ENCODE measurements at regions of chr14 and their contacts with region 1.

Region 1: DNA sequence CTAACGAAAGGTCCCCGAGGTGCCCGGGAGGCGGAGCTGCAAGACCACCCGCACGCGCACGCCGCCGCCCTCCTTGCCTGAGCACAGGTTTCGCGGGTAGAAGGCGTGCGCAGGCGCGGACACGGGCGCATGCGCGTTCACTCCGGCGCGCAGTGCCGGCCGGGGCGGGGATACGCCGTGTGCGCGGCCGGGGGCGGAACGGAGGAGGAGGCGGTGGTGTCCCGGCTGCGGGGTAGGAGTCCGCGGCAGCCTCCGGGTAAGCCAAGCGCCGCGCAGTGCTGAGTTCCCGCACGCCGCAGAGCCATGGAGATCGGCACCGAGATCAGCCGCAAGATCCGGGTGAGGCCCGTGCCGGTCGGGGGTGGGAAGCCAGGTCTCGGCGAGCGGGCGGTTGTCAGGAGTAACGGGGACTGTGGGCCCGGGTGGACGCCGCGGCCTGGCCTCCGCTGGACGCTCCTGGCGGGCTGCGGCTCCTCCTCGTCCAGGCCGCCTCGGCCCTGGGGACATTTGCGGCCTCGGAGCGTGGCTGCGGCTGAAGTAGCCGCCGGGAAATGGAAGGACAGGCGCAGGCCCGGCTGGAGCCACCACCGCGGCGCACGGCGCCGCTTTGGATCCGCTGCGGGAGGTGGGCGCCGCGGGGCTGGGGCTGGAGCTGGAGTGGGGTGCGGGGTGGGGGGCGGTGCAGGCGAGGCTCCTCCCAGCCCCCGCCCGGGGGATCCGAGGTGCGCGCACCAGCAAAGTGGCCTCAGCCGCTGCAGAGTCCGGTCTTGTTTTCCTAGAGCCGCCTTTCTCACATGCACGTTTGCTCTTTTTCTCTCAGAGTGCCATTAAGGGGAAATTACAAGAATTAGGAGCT is at the start of gene ZC3H14:
- DNase-seq: peak; percentile 91
- ATAC-seq: peak; percentile 94
- H3K4me3 Mint-ChIP-seq: peak within 1 kb of the TSS; percentile 83
- H3K27ac Mint-ChIP-seq: peak within 1 kb of the TSS; percentile 92
- H3K4me1 Mint-ChIP-seq: peaks cover 31% of the 10 kb centered on the region
- H3K27me3 Mint-ChIP-seq: peaks cover 12% of the 10 kb centered on the region
- total RNA-seq, gene ZC3H14: 46.9 to 63.6 TPM

Region 2: DNA sequence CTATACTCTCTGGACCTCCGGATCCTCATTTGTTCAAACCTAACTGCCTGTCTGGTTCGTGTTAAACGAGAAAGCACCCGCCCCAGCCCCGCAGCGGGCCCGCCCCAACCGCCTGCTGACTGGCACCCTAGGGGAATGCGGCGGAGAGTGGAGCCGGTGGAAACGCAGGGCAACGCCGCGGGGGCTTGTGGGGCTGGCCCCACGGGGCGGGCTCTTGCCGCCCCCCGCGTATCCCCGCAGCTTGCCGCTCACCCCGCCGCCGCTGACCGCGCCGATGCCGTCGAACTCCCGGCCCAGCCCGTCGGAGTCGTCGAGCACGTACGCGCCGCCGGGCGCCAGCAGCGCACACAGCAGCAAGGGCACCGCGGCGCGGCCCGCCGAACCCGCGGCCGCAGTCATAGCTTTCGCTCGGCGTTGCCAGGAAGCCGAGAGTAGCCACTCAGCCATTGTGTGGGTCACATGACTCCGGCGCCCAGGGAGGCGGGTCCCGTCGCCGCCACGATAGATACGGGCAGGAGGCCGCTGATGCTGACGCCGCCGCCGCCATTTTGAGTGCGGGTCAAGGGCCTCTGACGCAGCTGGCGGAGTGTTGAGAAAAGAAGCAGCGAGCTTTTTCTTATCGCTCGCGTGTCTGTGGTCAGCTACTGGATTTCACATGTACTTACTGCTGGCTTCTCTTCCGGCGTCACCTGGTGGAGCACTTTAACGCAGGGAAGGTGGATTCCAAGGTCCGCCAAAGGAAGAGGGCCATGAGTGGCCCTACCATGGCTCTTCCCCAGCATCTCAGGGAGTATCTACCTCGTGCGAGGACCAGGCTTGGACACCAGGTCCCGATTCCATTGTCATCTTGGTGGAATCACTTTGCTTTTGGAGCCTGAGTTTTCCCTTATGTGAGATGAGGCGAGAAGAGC is 570.1 kb before region 1 on chr14 and contains the start of gene GALC:
- CTCF ChIA-PET with region 1: no interaction called
- POLR2A ChIA-PET with region 1: no interaction called
- intact Hi-C with region 1: loop called in 1 of 2 experiments (anchors 5 kb)
- DNase-seq: peak; percentile 97
- ATAC-seq: peak; percentile 90
- H3K4me3 Mint-ChIP-seq: peak within 1 kb of the TSS; percentile 81
- H3K27ac Mint-ChIP-seq: peak within 1 kb of the TSS; percentile 95
- H3K4me1 Mint-ChIP-seq: peaks cover 56% of the 10 kb centered on the region
- H3K27me3 Mint-ChIP-seq: no peaks in the 10 kb centered on the region
- total RNA-seq, gene GALC: 10.3 to 10.8 TPM

Region 3: DNA sequence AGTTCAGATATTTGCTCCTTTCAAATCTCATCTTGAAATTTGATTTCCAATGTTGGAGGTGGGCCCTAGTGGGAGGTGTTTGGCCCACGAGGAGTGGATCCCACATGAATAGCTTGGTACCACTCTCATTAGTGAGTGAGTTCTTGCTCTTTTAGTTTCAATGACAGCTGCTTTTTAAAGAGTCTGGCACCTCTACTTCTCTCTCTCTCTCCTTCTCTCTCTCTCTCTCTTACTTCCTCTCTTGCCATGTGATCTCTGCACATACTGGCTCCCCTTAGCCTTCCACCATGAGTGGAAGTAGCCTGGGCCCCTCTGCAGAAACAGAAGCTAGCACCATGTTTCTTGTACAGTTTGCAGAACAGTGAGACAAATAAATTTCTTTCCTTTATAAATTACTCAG is 533.0 kb before region 1 on chr14:
- CTCF ChIA-PET with region 1: no interaction called
- POLR2A ChIA-PET with region 1: no interaction called
- intact Hi-C with region 1: no loop called
- DNase-seq: no peak
- ATAC-seq: no peak
- H3K4me3 Mint-ChIP-seq: no peak overlapping the region
- H3K27ac Mint-ChIP-seq: peak overlapping the region; percentile 32
- H3K4me1 Mint-ChIP-seq: peaks cover 50% of the 10 kb centered on the region
- H3K27me3 Mint-ChIP-seq: no peaks in the 10 kb centered on the region

Region 4: GRCh38 chr14:88146881-88147649 is 416.0 kb before region 1 on chr14:
- CTCF ChIA-PET with region 1: no interaction called
- POLR2A ChIA-PET with region 1: no interaction called
- intact Hi-C with region 1: no loop called
- DNase-seq: no peak
- ATAC-seq: no peak
- H3K4me3 Mint-ChIP-seq: no peak overlapping the region
- H3K27ac Mint-ChIP-seq: no peak overlapping the region
- H3K4me1 Mint-ChIP-seq: no peaks in the 10 kb centered on the region
- H3K27me3 Mint-ChIP-seq: no peaks in the 10 kb centered on the region

Region 5: GRCh38 chr14:88228522-88229236 is 334.4 kb before region 1 on chr14:
- CTCF ChIA-PET with region 1: no interaction called
- POLR2A ChIA-PET with region 1: no interaction called
- intact Hi-C with region 1: no loop called
- DNase-seq: peak; percentile 36
- ATAC-seq: peak; percentile 83
- H3K4me3 Mint-ChIP-seq: no peak overlapping the region
- H3K27ac Mint-ChIP-seq: no peak overlapping the region
- H3K4me1 Mint-ChIP-seq: peaks cover 4% of the 10 kb centered on the region
- H3K27me3 Mint-ChIP-seq: peaks cover 20% of the 10 kb centered on the region

Region 6: GRCh38 chr14:88385345-88386101 is 177.5 kb before region 1 on chr14 and contains the start of gene SPATA7:
- CTCF ChIA-PET with region 1: no interaction called
- POLR2A ChIA-PET with region 1: no interaction called
- intact Hi-C with region 1: loop called in 1 of 2 experiments (anchors 2 kb)
- DNase-seq: peak; percentile 93
- ATAC-seq: peak; percentile 99
- H3K4me3 Mint-ChIP-seq: peak within 1 kb of the TSS; percentile 96
- H3K27ac Mint-ChIP-seq: peak within 1 kb of the TSS; percentile 88
- H3K4me1 Mint-ChIP-seq: peaks cover 17% of the 10 kb centered on the region
- H3K27me3 Mint-ChIP-seq: no peaks in the 10 kb centered on the region
- total RNA-seq, gene SPATA7: 3.4 to 4.0 TPM

Region 7: GRCh38 chr14:88492272-88493089 is 70.6 kb before region 1 on chr14:
- CTCF ChIA-PET with region 1: interaction called, 3 read pairs
- POLR2A ChIA-PET with region 1: no interaction called
- intact Hi-C with region 1: loop called (anchors 2 kb)
- DNase-seq: peak; percentile 74
- ATAC-seq: peak; percentile 69
- H3K4me3 Mint-ChIP-seq: no peak overlapping the region
- H3K27ac Mint-ChIP-seq: no peak overlapping the region
- H3K4me1 Mint-ChIP-seq: no peaks in the 10 kb centered on the region
- H3K27me3 Mint-ChIP-seq: peaks cover 3% of the 10 kb centered on the region

Region 8: DNA sequence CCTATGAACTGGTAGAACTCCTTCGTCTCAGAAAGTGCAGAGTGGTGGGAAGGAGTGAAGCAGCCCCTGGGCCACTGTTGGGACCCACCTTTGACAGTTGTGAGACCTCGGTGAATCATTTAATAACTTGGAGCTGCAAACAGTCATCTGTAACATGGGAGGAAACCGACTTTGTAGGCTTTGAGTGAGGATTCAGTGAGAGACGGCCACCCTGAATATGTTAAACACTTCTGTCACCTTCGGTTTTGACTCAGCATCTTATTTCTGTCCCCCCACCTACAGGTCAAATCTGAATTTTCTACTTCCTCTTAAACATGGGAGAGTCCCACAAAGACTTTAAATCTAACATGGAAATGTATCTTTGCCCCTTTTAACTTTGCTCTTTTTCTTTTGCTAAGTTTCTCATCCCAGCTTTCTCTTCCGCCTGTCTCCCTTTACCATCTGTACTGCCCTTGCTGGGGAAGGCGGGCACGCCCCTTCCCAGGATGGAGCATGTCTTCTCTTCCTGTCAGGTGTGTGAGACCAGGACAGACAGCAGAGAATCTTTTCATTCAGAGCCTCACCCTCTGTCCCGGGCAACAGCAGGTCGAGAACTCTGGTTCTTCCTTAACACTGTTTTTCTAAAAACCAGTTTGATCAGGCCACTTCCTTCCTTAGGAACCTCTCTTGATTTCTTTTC is 36.8 kb after region 1 on chr14:
- CTCF ChIA-PET with region 1: no interaction called
- POLR2A ChIA-PET with region 1: interaction called, 4 read pairs
- intact Hi-C with region 1: loop called in 1 of 2 experiments (anchors 2 kb)
- DNase-seq: peak; percentile 52
- ATAC-seq: peak; percentile 94
- H3K4me3 Mint-ChIP-seq: peak overlapping the region; percentile 38
- H3K27ac Mint-ChIP-seq: peak overlapping the region; percentile 78
- H3K4me1 Mint-ChIP-seq: peaks cover 26% of the 10 kb centered on the region
- H3K27me3 Mint-ChIP-seq: no peaks in the 10 kb centered on the region

Region 9: DNA sequence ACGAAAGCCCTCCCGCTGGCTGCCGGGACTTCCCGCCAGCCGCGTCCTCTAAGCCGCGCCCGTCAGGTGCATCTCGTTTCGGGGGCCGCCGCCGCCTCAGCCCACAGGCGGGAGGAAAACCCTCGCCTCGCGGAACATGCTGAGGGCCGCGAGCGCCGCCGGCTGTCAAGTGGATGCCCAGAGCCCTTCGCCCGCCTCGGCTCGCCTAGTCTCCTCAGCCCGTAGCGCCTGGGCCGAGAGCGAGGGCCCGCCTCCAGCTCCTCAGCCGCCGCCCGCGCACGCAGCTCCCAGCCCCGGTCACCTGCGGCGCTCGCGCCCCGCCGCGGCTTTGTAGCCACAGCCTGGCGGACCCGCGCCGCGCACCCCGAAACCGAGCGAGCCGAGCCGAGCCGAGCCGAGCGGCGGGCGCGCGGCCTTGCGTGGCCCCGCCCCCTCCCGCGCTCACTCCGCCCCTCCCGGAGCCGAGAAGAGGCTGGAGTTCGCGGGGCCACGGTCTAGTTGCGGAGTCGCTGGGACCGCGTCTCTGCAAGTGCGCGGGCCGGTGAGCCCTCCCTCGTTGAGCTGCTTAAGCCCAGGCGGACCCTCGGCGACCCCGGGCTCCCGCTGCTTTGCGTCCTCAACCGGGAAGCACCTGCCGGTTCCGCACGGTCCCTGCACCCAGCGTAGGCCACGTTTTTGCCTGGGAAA is 229.7 kb after region 1 on chr14 and contains the start of gene EML5:
- CTCF ChIA-PET with region 1: interaction called, 4 read pairs
- POLR2A ChIA-PET with region 1: no interaction called
- intact Hi-C with region 1: loop called (anchors 2 to 5 kb)
- DNase-seq: peak; percentile 90
- ATAC-seq: peak; percentile 76
- H3K4me3 Mint-ChIP-seq: peak within 1 kb of the TSS; percentile 87
- H3K27ac Mint-ChIP-seq: peak within 1 kb of the TSS; percentile 87
- H3K4me1 Mint-ChIP-seq: peaks cover 26% of the 10 kb centered on the region
- H3K27me3 Mint-ChIP-seq: no peaks in the 10 kb centered on the region
- total RNA-seq, gene EML5: 8.1 TPM

Region 10: DNA sequence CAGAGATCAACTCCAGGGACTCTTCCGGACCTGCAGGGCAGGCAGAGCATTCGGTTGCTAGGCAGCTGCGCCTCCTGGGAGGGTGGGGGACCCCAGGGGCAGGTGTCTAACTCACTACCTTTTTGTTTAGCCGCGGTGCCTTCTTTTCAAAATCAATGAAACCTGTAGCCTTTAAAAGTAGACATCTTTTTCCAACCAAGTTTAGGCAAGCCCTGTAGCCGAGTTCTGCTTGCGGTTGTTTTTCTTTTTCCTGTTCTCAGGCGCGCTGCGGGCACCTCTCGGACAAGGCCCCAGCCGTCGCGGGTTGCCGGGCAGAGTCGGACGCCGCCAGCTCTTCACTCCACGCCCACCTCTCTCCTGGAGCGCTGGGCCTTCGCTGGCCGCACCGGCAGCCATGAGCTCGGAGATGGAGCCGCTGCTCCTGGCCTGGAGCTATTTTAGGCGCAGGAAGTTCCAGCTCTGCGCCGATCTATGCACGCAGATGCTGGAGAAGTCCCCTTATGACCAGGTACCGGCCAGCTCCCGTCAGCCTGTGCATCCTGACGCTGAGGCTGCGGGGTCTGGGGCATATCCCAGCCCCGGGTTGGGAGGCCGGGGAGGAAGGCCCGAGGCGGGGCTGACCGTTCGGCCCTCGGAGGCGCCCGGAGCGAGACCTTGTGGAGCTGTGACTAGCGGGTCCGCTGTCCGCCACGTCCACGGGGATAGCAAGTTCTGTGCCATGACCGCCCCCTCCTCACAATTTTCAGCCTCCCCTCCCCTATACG is 261.4 kb after region 1 on chr14 and contains the start of gene TTC8:
- CTCF ChIA-PET with region 1: no interaction called
- POLR2A ChIA-PET with region 1: no interaction called
- intact Hi-C with region 1: loop called (anchors 1 kb)
- DNase-seq: peak; percentile 90
- ATAC-seq: peak; percentile 97
- H3K4me3 Mint-ChIP-seq: peak within 1 kb of the TSS; percentile 81
- H3K27ac Mint-ChIP-seq: peak within 1 kb of the TSS; percentile 94
- H3K4me1 Mint-ChIP-seq: peaks cover 8% of the 10 kb centered on the region
- H3K27me3 Mint-ChIP-seq: peaks cover 3% of the 10 kb centered on the region
- total RNA-seq, gene TTC8: 2.9 to 4.4 TPM

Measured in activated CD4-positive, alpha-beta T cell treated with anti-CD3 and anti-CD28 coated beads for 36 hours (primary cell).